Mammary epithelial cell (primary cell): ENCODE measurements at regions of chr2 and their contacts with region 1.

Region 1: DNA sequence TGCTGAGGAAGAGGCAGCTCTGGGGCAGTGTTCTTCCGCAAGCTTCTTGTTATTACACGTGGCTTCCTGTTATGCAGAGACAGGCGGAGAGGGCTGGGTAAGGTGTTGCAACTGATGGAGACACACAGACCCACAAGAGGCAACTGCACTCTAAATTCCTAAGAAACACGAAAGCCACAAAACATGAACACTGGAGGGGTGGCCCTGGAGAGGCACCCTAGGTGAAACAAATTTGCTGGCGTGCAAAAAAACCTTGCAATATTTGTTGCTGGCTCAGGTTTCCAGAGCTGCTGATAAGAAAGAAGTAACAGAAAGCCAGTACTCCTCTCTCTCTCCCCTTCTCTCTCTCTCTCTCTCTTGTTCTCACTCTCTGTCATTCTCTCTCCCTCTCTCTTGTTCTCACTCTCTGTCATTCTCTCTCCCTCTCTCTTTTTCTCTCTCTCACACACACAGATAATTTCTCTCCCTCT is 31.8 kb downstream of the ARHGAP25 start:
- DNase-seq: peak; percentile 65
- H3K4me3 ChIP-seq: no peak overlapping the region
- H3K27ac ChIP-seq: no peak overlapping the region
- H3K4me1 ChIP-seq: peaks cover 34% of the 10 kb centered on the region
- H3K27me3 ChIP-seq: no peaks in the 10 kb centered on the region
- CTCF ChIP-seq: no peak

Region 2: GRCh38 chr2:68799140-68800026 is 33.0 kb after region 1 on chr2:
- CTCF ChIA-PET with region 1: no interaction called
- dilution Hi-C with region 1: no loop called
- in situ Hi-C with region 1: no loop called
- intact Hi-C with region 1: loop called (anchors 2 kb)
- DNase-seq: peak; percentile 96
- H3K4me3 ChIP-seq: peak overlapping the region; percentile 45 to 70 (median 69)
- H3K27ac ChIP-seq: peak overlapping the region; percentile 89
- H3K4me1 ChIP-seq: peaks cover 53% of the 10 kb centered on the region
- H3K27me3 ChIP-seq: no peaks in the 10 kb centered on the region
- CTCF ChIP-seq: no peak

Region 3: DNA sequence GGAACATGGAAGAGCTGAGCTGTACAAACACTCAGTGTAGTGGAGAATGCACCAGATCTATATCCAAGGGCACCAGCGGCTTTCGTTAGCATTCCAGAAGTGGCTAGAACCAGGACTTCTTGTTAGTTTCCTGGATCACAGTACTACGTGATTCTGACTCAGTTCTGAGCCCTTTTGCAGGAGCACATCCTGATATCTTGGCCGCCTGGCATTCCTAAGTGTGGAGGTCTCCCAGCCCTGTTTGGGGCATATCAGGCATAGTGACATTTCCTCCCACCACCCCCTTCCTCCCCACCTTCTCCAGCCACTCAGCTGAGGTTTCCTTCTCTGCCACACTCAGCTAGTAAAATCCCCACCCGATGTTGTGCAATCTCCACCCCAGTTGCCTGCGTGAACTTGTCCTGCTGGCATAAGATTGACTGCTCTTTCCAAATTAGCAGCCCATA is 41.4 kb after region 1 on chr2:
- CTCF ChIA-PET with region 1: no interaction called
- dilution Hi-C with region 1: no loop called
- in situ Hi-C with region 1: no loop called
- intact Hi-C with region 1: loop called (anchors 2 kb)
- DNase-seq: peak; percentile 95
- H3K4me3 ChIP-seq: no peak overlapping the region
- H3K27ac ChIP-seq: peak overlapping the region; percentile 63
- H3K4me1 ChIP-seq: peaks cover 77% of the 10 kb centered on the region
- H3K27me3 ChIP-seq: no peaks in the 10 kb centered on the region
- CTCF ChIP-seq: no peak

Region 4: DNA sequence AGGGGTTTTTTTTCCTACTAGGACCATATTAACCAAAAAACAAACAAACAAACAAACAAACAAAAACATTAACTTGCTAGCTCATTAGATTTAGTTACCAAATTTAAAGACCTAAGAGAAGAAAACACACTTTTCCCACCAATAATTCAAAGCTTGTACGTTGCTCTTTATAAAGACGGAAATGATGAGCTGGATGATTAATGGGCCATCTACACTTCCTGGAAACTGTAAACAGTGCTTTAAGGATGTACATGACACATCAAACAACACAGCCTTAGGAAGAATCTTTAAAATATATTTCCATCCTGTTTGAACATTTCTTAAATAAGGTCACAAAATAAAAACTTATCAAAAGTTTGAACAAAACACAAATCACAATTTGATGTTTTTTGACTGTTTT is 103.8 kb after region 1 on chr2:
- CTCF ChIA-PET with region 1: no interaction called
- dilution Hi-C with region 1: no loop called
- in situ Hi-C with region 1: no loop called
- intact Hi-C with region 1: no loop called
- DNase-seq: no peak
- H3K4me3 ChIP-seq: no peak overlapping the region
- H3K27ac ChIP-seq: no peak overlapping the region
- H3K4me1 ChIP-seq: no peaks in the 10 kb centered on the region
- H3K27me3 ChIP-seq: no peaks in the 10 kb centered on the region
- CTCF ChIP-seq: no peak

Region 5: GRCh38 chr2:68936427-68936826 is 170.0 kb after region 1 on chr2:
- CTCF ChIA-PET with region 1: no interaction called
- dilution Hi-C with region 1: no loop called
- in situ Hi-C with region 1: no loop called
- intact Hi-C with region 1: no loop called
- DNase-seq: peak; percentile 94
- H3K4me3 ChIP-seq: no peak overlapping the region
- H3K27ac ChIP-seq: peak overlapping the region; percentile 59
- H3K4me1 ChIP-seq: peaks cover 39% of the 10 kb centered on the region
- H3K27me3 ChIP-seq: no peaks in the 10 kb centered on the region
- CTCF ChIP-seq: peak in 1 of 2 donors; percentile 4